HepG2 (cell line): ENCODE measurements at regions of chr6 and their contacts with region 1.

Region 1: DNA sequence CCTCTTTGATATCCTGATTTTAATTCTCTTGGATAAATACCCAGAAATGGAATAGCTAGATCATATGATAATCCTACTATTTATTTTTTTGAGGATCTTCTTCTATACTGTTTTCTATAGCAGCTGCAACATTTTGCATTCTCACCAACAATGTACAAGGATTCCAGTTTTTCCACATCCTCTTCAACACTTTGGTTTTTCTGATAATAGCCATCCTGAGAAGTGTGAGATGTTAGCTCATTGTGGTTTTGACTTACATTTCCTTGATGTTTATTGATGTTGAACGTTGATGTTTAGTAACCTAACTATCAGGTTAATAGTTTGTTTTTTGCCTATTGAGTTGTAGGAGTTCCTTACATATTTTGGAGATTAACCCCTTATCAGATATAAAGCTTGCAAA is 217.3 kb downstream of the LRFN2 start:
- DNase-seq: no peak
- ATAC-seq: no peak
- H3K4me3 ChIP-seq: no peak overlapping the region
- H3K27ac ChIP-seq: no peak overlapping the region
- H3K4me1 ChIP-seq: no peaks in the 10 kb centered on the region
- H3K27me3 ChIP-seq: no peaks in the 10 kb centered on the region
- CTCF ChIP-seq: no peak
- EP300 ChIP-seq: no peak
- POLR2A ChIP-seq: no peak
- RAD21 ChIP-seq: no peak

Region 2: GRCh38 chr6:38973178-38974054 is 1396.5 kb before region 1 on chr6:
- CTCF ChIA-PET with region 1: no interaction called
- POLR2A ChIA-PET with region 1: no interaction called
- in situ Hi-C with region 1: no loop called
- intact Hi-C with region 1: loop called (anchors 5 kb)
- DNase-seq: peak; percentile 72
- ATAC-seq: peak; percentile 96
- H3K4me3 ChIP-seq: no peak overlapping the region
- H3K27ac ChIP-seq: no peak overlapping the region
- H3K4me1 ChIP-seq: no peaks in the 10 kb centered on the region
- H3K27me3 ChIP-seq: no peaks in the 10 kb centered on the region
- CTCF ChIP-seq: peak; percentile 62
- EP300 ChIP-seq: no peak
- POLR2A ChIP-seq: no peak
- RAD21 ChIP-seq: no peak